Thyroid gland (tissue), 4 donors: ENCODE measurements at regions of chr14 and their contacts with region 1.

Region 1: DNA sequence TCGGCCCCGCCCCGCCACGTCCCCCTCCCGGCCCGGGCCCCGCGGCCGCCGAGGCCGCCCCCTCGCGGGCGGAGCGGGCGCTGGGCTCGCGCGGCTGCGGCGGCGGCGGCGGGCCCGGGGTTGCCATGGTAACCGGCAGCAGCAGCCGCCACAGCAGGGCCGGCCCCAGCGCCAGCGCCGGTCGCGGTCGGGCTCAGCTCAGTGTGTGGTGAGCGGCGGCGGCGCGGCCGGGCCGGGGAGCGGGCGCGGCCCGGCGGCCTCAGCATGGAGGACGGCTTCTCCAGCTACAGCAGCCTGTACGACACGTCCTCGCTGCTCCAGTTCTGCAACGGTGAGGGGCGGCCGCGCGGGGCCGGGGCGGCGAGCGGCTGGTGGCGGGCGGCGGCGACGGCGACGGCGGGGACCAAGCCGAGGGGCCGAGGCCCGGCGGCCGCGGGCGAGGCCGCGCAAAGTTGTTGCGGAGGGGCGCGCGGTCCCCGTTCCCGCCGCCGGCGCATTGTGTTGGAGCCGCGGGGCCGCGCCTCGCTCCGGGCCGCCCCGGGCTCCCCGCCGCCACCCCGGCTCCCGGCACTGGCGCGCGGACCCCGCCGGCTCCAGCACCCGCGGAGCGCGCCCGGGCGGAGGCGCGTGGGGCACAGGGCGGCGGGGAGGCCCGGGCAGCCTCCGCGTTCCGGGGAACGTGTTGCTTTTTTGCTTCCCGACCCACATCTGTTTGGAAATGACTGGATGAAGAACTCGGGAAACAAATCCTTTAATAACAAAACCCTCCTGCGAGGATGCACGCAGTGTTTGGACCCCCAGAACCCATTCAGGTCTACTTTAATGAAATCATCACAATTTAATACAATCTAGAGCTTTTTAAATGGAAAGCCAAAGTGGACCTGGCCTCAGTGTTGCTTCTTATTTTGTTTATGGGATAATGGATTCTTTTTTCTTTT is at the start of gene EML1:
- DNase-seq: peak; percentile 86
- H3K4me3 ChIP-seq: peak within 1 kb of the TSS in 2 of 3 donors; percentile 19 to 40
- H3K27ac ChIP-seq: peak within 1 kb of the TSS; percentile 46 to 75 (median 73)
- H3K4me1 ChIP-seq: peaks cover 15 to 27% of the 10 kb centered on the region in 2 donors
- H3K27me3 ChIP-seq: no peaks in the 10 kb centered on the region
- CTCF ChIP-seq: peak in 2 of 6 experiments; percentile 15 to 33
- POLR2A ChIP-seq: peak in 1 of 2 donors; percentile 81
- total RNA-seq, gene EML1: 24.2 to 58.7 (median 37.9) TPM

Region 2: GRCh38 chr14:98826618-98827017 is 966.9 kb before region 1 on chr14:
- intact Hi-C with region 1: no loop called
- DNase-seq: peak; percentile 52 to 73
- H3K4me3 ChIP-seq: no peak overlapping the region
- H3K27ac ChIP-seq: no peak overlapping the region
- H3K4me1 ChIP-seq: peaks cover under 1 to 18% of the 10 kb centered on the region in 2 donors
- H3K27me3 ChIP-seq: no peaks in the 10 kb centered on the region
- CTCF ChIP-seq: no peak
- POLR2A ChIP-seq: no peak

Region 3: DNA sequence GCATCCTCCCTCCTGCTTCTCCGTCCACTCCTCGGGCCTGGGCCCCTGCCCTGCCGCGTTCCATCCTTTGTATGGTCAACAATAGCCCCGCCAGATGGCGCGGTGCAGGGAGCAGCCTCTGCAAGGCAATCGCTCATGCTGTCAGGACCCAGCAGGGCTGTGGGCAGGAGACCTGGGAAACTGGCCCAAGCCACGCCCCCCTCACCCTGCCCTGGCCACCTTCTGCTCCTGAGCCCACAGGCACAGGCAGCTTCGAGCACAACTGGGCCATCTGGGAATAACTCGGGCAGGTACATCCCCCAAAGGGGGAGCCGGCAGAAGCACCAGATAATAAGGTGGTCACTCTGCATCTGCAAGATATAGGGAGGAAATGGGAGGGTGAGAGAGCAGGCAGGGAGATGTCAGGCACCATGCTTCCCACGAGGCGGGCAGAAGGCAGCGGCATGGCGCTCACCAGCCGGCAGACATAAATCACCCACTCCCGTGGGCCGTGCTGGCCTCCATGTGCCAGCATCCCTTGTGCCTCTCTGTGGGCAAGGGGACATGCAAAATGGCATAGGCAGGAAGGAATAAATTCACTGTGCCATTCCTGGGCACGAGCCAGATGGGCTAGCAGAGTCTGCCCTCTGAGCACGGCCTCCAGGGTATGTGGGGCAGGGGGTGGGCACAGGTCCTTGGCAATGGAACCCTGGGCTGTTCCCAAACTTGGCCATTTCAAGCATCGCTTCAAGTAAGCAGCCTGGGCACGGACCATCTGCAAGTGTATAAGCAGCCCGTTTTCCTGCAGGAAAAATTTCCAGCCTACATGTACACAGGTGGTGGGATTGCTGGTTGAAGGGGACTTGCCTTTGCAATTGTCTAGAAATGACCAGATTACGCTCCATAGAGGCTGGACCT is 230.0 kb before region 1 on chr14:
- intact Hi-C with region 1: no loop called
- DNase-seq: peak; percentile 93
- H3K4me3 ChIP-seq: no peak overlapping the region
- H3K27ac ChIP-seq: peak overlapping the region; percentile 51 to 84 (median 70)
- H3K4me1 ChIP-seq: peaks cover 60 to 67% of the 10 kb centered on the region in 2 donors
- H3K27me3 ChIP-seq: no peaks in the 10 kb centered on the region
- CTCF ChIP-seq: peak in 4 of 6 experiments; percentile 54 to 66 (median 60)
- POLR2A ChIP-seq: no peak

Region 4: DNA sequence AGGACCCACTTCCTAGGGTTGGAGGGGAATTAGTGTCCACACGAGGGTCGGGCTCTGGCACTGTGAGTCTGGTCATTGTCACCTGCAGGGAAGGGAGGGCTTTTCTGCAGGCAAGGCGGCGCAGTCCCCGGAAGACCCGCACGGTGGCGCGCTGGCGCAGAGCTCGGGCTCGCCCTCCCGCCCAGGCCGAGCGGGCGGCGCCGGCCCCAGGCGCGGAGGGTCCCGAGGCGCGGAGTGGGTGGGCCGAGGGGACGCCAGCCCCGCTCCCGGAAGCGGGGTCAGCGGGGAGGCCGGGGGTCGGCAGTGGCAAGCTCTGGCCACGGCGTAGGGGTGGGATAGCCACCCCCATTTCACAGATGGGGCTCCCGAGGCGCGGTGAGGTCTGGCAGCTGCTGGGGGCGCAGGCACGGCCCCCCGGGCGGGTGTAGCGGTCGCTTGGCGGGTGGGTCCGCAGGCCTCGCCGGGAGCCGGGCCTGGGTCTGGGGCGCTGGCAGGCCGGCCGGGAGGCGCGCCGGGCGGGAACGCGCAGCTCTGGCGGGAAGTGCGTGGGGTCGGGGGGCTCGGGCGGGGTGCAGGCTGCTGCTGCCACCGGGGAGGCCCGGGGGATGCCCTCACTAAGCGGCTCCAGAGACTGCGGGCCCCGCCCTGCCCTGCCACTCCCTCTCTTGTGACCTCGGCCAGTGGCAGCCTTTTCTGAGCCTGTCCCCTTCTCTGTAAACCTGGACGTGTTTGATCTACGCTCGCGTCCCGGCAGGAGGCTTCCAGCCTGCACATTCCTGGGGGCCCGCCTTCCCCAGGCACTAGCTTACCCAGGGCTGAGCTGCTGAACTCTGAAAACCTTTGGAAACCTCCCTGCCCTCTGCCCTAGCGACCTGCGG is 63.3 kb before region 1 on chr14:
- intact Hi-C with region 1: loop called (anchors 5 kb)
- DNase-seq: peak; percentile 69 to 74
- H3K4me3 ChIP-seq: peak overlapping the region in 2 of 3 donors; percentile 35 to 44
- H3K27ac ChIP-seq: no peak overlapping the region
- H3K4me1 ChIP-seq: peaks cover 0 to 48% of the 10 kb centered on the region in 2 donors
- H3K27me3 ChIP-seq: no peaks in the 10 kb centered on the region
- CTCF ChIP-seq: peak; percentile 35 to 97 (median 91)
- POLR2A ChIP-seq: no peak

Region 5: GRCh38 chr14:99936747-99937474 is 143.4 kb after region 1 on chr14:
- intact Hi-C with region 1: no loop called
- DNase-seq: no peak
- H3K4me3 ChIP-seq: no peak overlapping the region
- H3K27ac ChIP-seq: no peak overlapping the region
- H3K4me1 ChIP-seq: peaks cover 4 to 7% of the 10 kb centered on the region in 2 donors
- H3K27me3 ChIP-seq: no peaks in the 10 kb centered on the region
- CTCF ChIP-seq: no peak
- POLR2A ChIP-seq: no peak